OCI-LY7 (cell line): ENCODE measurements at regions of chr10 and their contacts with region 1.

Region 1: DNA sequence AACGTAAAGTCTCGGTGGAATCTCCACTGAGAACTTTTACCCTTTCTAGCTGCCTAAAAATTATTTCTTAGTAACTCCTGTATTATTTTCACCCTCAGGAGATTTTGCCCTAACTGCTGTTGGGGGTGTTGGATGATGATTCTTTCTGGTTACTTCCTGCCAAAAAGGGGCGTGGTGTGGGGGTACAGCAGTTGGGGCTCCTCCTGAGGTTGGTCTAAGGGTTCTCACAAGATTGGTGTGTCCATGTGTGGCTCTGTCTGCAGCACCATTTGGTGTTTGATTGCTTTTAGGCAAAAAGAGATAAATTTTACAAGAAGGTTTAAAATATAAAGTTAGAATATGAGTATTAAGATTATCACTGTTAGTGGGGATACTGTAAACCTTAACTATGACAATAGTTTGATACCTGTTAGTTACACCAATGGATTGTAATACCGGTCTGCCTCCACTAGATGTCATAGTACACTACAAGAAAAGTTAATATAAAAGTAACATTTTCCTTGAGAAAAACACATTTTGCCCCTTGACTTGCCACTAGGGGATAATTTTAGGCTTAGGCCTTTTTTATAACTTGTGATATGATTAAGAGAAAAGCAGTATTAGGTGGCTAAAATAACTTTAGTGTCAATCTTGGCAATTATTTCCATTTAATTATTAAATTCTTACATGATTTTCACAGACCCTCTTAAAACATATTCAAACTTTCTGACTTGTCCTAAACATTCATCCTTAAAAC is 928.7 kb downstream of the IPMK start:
- DNase-seq: peak; percentile 58
- H3K4me3 ChIP-seq: no peak overlapping the region
- H3K27ac ChIP-seq: no peak overlapping the region
- H3K4me1 ChIP-seq: no peaks in the 10 kb centered on the region
- CTCF ChIP-seq: peak; percentile 85

Region 2: GRCh38 chr10:57049061-57049460 is 289.9 kb before region 1 on chr10:
- CTCF ChIA-PET with region 1: no interaction called
- POLR2A ChIA-PET with region 1: no interaction called
- intact Hi-C with region 1: no loop called
- DNase-seq: no peak
- H3K4me3 ChIP-seq: no peak overlapping the region
- H3K27ac ChIP-seq: no peak overlapping the region
- H3K4me1 ChIP-seq: no peaks in the 10 kb centered on the region
- CTCF ChIP-seq: no peak

Region 3: GRCh38 chr10:57457972-57458512 is 119.1 kb after region 1 on chr10:
- CTCF ChIA-PET with region 1: no interaction called
- POLR2A ChIA-PET with region 1: no interaction called
- intact Hi-C with region 1: no loop called
- DNase-seq: no peak
- H3K4me3 ChIP-seq: no peak overlapping the region
- H3K27ac ChIP-seq: no peak overlapping the region
- H3K4me1 ChIP-seq: no peaks in the 10 kb centered on the region
- CTCF ChIP-seq: no peak

Region 4: DNA sequence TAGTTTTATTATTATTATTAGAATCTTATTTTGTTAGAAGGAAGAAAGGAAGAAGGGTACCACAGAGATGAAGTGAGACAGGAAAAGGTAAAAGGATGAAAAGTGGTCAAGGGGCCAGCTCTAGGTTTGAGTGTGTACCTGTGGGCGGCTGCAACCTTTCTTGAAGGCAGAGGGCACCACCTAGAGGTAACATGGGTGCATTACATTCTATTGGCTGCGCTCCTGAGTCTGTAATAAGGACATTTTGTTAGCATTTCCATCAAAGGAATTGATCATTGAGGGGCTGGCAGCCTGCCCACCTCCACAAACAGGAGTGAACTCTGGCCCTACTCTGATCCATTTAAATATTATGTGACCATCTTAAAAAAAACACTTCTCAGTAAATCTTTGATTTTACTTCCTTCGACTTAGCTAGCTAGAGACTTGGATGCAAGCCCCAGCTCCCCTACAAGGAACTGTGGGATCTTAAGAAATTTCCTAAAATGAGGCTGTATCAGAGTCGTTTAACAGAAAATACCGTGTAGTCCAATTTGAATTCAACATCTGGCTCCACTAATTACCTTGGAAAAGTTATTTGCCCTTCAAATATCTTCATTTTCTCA is 318.3 kb after region 1 on chr10:
- CTCF ChIA-PET with region 1: no interaction called
- POLR2A ChIA-PET with region 1: interaction called, 3 read pairs
- intact Hi-C with region 1: loop called (anchors 1 kb)
- DNase-seq: peak; percentile 62
- H3K4me3 ChIP-seq: no peak overlapping the region
- H3K27ac ChIP-seq: no peak overlapping the region
- H3K4me1 ChIP-seq: no peaks in the 10 kb centered on the region
- CTCF ChIP-seq: peak; percentile 86

Region 5: GRCh38 chr10:58064714-58065528 is 725.9 kb after region 1 on chr10:
- CTCF ChIA-PET with region 1: no interaction called
- POLR2A ChIA-PET with region 1: no interaction called
- intact Hi-C with region 1: loop called (anchors 10 kb)
- DNase-seq: peak; percentile 37
- H3K4me3 ChIP-seq: no peak overlapping the region
- H3K27ac ChIP-seq: no peak overlapping the region
- H3K4me1 ChIP-seq: no peaks in the 10 kb centered on the region
- CTCF ChIP-seq: peak; percentile 82